ENCODE measurements at regions of chr19 and their contacts with region 1.

Region 1: DNA sequence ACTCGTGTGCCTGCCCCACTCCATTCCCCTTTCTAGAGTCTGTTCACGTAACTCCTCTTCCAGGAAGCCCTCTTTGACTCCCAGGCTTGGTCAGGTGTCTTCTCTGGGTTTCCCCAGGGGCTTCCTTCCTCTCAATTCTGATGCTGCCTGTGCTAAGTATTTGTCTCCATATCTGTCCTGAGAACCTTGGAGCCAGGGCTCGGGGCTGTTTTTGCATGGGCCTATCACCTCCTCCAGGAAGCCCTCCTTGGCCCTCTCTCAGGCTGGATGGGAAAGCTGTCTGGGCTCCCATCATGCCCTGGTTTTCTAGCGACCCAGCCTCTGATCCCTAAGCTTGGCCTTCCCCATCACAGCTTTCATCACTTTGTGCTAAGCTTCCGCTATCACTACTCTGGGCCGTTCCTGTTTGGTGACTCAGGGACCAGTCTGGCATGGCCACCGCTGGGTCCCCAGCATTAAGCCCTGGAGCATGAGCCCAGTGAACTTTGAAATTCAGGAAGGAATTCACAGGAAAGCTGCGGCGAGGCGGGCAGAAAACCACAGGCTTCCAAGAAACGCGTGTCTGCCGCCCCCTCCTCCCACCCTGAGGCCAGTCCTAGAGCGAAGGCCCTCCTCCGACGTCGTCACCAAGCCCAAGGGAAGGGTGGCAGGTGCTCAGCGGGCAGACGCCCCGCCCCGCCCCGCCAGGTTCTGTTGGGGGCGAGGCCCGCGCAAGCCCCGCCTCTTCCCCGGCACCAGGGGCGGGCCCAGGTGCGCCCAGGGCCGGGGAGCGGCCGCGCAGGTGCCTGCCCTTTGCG is 486 bp upstream of the SPINT2 start:
- DNase-seq: peak; percentile 83
- H3K4me3 ChIP-seq: peak overlapping the region; percentile 61 to 72
- H3K27ac ChIP-seq: peak overlapping the region; percentile 74 to 89
- H3K4me1 ChIP-seq: peaks cover 21% of the 10 kb centered on the region
- H3K27me3 ChIP-seq: no peaks in the 10 kb centered on the region
- CTCF ChIP-seq: no peak
- POLR2A ChIP-seq: no peak

Region 2: DNA sequence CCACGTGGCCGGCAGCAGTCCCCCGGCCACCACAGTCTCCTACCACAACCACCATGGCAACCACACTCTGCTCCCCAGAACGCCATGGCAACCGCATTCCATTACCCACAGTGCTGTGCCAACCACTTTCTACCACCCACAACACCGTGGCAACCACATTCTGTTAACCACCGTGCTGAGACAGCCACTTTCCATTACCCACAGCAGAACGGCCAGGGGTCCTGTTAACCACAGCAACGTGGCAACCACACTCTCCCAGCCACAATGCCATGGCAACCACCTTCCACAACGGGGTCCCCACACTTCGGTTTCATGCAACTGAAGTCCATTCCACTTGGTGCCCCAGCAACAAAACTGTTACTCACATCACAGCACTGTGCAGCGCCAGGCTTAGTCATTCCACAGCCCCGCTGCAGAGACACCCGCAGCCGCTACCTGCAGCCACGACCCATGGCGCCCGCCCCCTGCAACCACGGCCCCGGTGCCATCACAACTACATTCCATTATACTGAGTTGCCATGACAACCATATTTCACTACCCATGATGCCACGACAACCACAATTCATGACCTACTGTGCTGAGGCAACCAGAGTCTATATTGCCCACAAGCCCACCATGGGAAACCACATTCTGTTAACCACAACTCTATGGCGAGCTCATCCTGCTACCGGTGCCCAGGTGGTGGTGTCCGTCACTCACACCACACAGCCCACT is 49.8 kb before region 1 on chr19:
- intact Hi-C with region 1: no loop called
- DNase-seq: no peak
- H3K4me3 ChIP-seq: no peak overlapping the region
- H3K27ac ChIP-seq: no peak overlapping the region
- H3K4me1 ChIP-seq: peaks cover 20% of the 10 kb centered on the region
- H3K27me3 ChIP-seq: no peaks in the 10 kb centered on the region
- CTCF ChIP-seq: no peak
- POLR2A ChIP-seq: no peak

Region 3: DNA sequence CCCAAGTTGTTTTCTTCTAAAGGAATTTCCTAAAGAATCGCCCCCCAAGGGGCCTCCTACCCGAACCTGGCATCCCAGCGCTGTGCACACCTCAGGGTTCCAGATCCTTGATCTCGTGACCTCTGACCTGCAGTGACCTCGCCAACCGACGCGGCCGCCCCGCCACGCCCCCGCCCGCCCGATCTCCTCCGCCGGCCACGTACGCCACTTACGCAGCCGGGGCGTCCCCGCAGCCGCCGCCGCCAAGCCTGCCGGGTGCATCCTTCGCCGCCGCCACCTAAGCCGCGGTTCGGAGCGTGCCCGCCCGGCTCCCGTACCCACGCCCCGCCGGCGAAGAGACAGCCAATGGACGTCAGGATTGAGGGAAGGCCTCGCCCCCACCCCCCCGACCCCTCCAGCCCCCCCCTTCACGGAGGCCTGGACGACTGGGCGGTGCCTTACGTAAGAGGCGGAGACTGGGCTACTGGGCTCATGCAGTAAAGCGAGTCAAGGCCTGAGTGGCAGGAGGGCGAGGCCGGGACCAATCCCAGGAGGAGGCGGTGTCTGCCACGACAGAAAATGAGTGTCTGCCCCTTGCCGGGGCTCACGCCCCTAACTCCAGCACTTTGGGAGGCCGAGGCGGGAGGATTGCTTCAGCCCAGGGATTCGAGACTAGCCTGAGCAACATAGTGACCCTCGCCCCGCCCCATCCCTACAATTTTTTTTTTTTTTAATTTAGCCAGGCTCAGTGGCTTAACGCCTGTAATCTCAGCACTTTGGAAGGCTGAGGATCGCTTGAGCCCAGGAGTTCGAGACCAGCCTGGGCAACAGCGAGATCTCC is 52.0 kb after region 1 on chr19 and contains the start of gene YIF1B:
- intact Hi-C with region 1: loop called (anchors 5 kb)
- DNase-seq: peak; percentile 98
- H3K4me3 ChIP-seq: peak within 1 kb of the TSS; percentile 60 to 63
- H3K27ac ChIP-seq: peak within 1 kb of the TSS; percentile 85 to 89
- H3K4me1 ChIP-seq: peaks cover 7% of the 10 kb centered on the region
- H3K27me3 ChIP-seq: no peaks in the 10 kb centered on the region
- CTCF ChIP-seq: no peak
- POLR2A ChIP-seq: no peak
- total RNA-seq, gene YIF1B: 63.5 to 63.7 TPM

Region 4: DNA sequence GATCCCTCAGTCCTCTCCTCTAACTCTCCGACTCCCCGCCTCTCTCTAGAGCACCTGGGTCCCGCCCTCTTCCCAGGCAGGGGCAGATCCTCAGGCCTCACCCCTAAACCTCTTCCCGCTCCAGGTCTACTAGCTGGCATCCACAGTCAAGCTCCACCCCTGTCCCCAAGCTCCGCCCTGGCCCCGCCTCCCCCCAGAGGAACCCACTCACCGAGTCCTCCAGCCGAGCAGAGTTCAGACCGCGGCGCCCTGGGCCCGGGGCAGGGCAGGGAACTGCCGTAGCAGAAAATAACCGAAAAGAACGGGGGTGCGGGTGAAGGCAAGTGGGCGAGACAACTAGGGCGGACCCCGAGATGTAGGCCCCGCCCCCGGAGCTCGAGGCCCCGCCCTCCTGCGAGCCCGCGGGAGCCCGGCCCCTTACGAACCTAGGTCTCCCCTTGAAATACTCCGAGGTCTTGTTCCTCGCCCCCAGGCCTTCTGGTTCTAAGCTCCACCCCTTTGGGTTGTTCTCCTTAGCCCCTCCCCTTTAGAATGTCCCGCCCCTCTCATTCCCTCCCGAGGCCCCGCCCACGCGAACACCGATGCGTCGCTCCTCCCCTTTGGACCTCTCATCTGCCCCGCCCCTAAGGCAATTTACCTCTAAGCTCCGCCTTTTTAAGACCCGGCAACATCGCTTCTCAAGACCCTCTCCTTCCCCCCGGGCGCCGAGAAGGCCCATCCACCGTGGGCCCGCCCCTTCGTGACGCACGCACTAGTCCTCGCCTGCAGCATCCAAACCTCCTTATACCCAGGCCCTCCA is 123.9 kb after region 1 on chr19 and contains the start of gene GGN:
- intact Hi-C with region 1: no loop called
- DNase-seq: peak; percentile 80
- H3K4me3 ChIP-seq: peak within 1 kb of the TSS; percentile 35 to 57
- H3K27ac ChIP-seq: peak within 1 kb of the TSS in 1 of 2 donors; percentile 37
- H3K4me1 ChIP-seq: peaks cover 23% of the 10 kb centered on the region
- H3K27me3 ChIP-seq: no peaks in the 10 kb centered on the region
- CTCF ChIP-seq: no peak
- POLR2A ChIP-seq: no peak
- total RNA-seq, gene GGN: 43.7 to 80.2 TPM

Measured in testis (tissue), 5 donors.